Mammary epithelial cell (primary cell): ENCODE measurements at regions of chr1 and their contacts with region 1.

Region 1: GRCh38 chr1:63442141-63442475 is 74.7 kb downstream of the ALG6 start:
- DNase-seq: no peak
- H3K4me3 ChIP-seq: no peak overlapping the region
- H3K27ac ChIP-seq: no peak overlapping the region
- H3K4me1 ChIP-seq: no peaks in the 10 kb centered on the region
- H3K27me3 ChIP-seq: no peaks in the 10 kb centered on the region
- CTCF ChIP-seq: no peak

Region 2: DNA sequence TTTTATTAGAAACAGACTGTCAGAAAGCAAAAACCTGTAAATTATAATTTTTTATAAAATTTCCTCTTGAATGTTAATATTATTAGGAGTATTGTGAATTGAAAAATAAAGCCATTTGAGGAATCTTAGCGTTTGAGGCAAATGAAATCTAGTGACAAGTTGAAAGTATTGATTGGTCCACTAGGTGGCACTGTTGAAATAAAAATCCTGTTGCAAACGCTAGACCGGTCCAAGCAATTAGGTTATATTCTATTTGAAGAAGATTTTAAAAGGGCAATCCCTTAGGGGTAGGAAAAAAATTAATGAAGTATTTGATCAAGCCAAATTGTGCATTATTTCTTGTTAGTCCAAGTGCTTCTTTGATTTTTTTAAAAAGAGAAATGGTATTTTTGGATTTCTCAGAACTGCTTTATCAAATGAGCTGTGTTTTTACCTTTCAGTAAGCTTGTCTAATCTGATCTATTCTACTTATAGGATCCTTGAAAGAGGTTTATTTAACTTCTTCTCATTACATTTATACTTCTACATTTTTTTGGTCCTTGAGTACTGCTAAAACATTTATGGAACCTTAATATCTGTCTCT is 600.4 kb before region 1 on chr1:
- CTCF ChIA-PET with region 1: no interaction called
- dilution Hi-C with region 1: no loop called
- in situ Hi-C with region 1: no loop called
- intact Hi-C with region 1: loop called (anchors 5 kb)
- DNase-seq: peak; percentile 35
- H3K4me3 ChIP-seq: no peak overlapping the region
- H3K27ac ChIP-seq: no peak overlapping the region
- H3K4me1 ChIP-seq: no peaks in the 10 kb centered on the region
- H3K27me3 ChIP-seq: no peaks in the 10 kb centered on the region
- CTCF ChIP-seq: peak; percentile 56 to 58

Region 3: GRCh38 chr1:63004868-63005267 is 437.2 kb before region 1 on chr1:
- CTCF ChIA-PET with region 1: no interaction called
- dilution Hi-C with region 1: no loop called
- in situ Hi-C with region 1: no loop called
- intact Hi-C with region 1: loop called (anchors 2 kb)
- DNase-seq: no peak
- H3K4me3 ChIP-seq: no peak overlapping the region
- H3K27ac ChIP-seq: no peak overlapping the region
- H3K4me1 ChIP-seq: no peaks in the 10 kb centered on the region
- H3K27me3 ChIP-seq: no peaks in the 10 kb centered on the region
- CTCF ChIP-seq: peak; percentile 18 to 38

Region 4: GRCh38 chr1:63189677-63190076 is 252.4 kb before region 1 on chr1:
- CTCF ChIA-PET with region 1: no interaction called
- dilution Hi-C with region 1: no loop called
- in situ Hi-C with region 1: no loop called
- intact Hi-C with region 1: loop called (anchors 1 kb)
- DNase-seq: no peak
- H3K4me3 ChIP-seq: no peak overlapping the region
- H3K27ac ChIP-seq: no peak overlapping the region
- H3K4me1 ChIP-seq: no peaks in the 10 kb centered on the region
- H3K27me3 ChIP-seq: no peaks in the 10 kb centered on the region
- CTCF ChIP-seq: peak; percentile 21 to 25

Region 5: DNA sequence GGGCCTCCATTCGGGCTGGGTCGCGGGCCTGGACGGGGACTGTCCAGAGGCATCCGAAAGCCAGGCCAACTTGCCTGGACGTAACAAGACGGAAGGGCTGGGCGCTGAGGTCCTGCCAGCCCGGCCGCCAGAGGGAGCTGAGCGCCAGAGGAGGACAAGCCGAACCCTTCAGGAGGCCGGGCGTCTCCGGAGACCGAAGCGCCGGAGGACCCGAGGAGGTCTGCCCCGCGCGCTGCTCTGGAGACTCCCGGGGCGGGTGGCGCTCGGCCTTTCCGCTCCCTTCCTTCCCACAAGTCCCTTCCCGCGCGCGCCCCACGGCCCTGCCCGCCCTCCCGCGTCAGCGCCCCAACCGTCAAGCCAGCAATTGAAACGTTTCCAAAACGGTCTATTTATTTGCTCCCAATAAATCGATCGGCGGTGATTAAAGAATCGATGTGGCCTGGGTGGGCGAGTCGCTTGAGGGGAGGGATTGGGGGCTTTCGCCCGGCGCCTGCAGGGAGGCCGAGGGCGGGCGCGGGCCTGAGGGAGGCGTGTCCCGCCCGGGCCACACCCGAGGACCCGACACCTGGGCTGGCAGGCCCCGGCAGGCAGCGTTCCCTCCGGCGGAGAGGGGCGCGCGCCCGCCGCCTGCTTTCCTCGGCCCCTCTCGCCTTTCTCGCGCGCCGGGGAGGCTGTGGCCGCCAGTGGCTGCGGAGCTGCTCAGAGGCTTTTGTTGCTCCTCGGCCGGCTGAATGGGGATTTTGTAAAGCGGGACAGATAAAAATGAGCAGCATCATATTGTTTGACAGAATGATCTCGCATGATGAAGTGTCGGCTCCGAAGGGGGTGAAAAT is 124.9 kb before region 1 on chr1:
- CTCF ChIA-PET with region 1: no interaction called
- dilution Hi-C with region 1: no loop called
- in situ Hi-C with region 1: no loop called
- intact Hi-C with region 1: loop called (anchors 1 kb)
- DNase-seq: peak; percentile 68
- H3K4me3 ChIP-seq: peak overlapping the region; percentile 51 to 59 (median 52)
- H3K27ac ChIP-seq: no peak overlapping the region
- H3K4me1 ChIP-seq: peaks cover 5% of the 10 kb centered on the region
- H3K27me3 ChIP-seq: peaks cover 39% of the 10 kb centered on the region
- CTCF ChIP-seq: peak; percentile 53 to 84

Region 6: GRCh38 chr1:63367215-63368103 is 74.6 kb before region 1 on chr1 and contains the start of gene ALG6:
- CTCF ChIA-PET with region 1: no interaction called
- dilution Hi-C with region 1: no loop called
- in situ Hi-C with region 1: no loop called
- intact Hi-C with region 1: loop called (anchors 5 kb)
- DNase-seq: peak; percentile 92
- H3K4me3 ChIP-seq: peak within 1 kb of the TSS; percentile 72 to 98 (median 90)
- H3K27ac ChIP-seq: peak within 1 kb of the TSS; percentile 45
- H3K4me1 ChIP-seq: peaks cover 3% of the 10 kb centered on the region
- H3K27me3 ChIP-seq: no peaks in the 10 kb centered on the region
- CTCF ChIP-seq: peak in 1 of 2 donors; percentile 13
- total RNA-seq, gene ALG6: 8.2 to 11.3 TPM

Region 7: GRCh38 chr1:63428815-63429214 is 13.3 kb before region 1 on chr1:
- CTCF ChIA-PET with region 1: no interaction called
- dilution Hi-C with region 1: no loop called
- in situ Hi-C with region 1: no loop called
- intact Hi-C with region 1: no loop called
- DNase-seq: no peak
- H3K4me3 ChIP-seq: no peak overlapping the region
- H3K27ac ChIP-seq: no peak overlapping the region
- H3K4me1 ChIP-seq: no peaks in the 10 kb centered on the region
- H3K27me3 ChIP-seq: no peaks in the 10 kb centered on the region
- CTCF ChIP-seq: no peak

Region 8: GRCh38 chr1:63624911-63625310 is 182.8 kb after region 1 on chr1:
- CTCF ChIA-PET with region 1: no interaction called
- dilution Hi-C with region 1: no loop called
- in situ Hi-C with region 1: no loop called
- intact Hi-C with region 1: no loop called
- DNase-seq: no peak
- H3K4me3 ChIP-seq: no peak overlapping the region
- H3K27ac ChIP-seq: no peak overlapping the region
- H3K4me1 ChIP-seq: peaks cover 30% of the 10 kb centered on the region
- H3K27me3 ChIP-seq: no peaks in the 10 kb centered on the region
- CTCF ChIP-seq: peak; percentile 12 to 31